Sciatic nerve (tissue), 2 donors: ENCODE measurements at regions of chr12 and their contacts with region 1.

Region 1: DNA sequence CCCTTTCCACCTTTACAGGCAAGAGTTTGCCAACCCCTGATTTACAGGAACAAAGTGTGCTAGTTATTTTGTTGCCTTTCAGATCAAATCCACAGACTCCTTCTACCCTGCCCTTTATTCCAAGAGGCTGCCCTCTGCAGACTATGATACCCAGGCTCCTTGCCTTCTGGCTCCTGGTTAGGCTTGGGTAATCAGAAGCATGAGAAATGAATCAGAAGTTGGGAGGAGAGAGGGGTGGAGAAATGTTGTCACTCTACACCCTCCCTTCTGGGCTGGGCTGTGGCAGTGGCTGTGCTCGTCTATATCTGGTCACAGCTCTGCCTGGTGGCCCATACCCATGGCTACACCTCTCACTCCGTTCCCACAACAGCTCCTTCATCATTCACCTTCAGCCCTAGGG is 204.6 kb upstream of the PLXNC1 start:
- DNase-seq: no peak
- ATAC-seq: peak; percentile 80

Region 2: GRCh38 chr12:94020335-94020734 is 76.6 kb after region 1 on chr12:
- intact Hi-C with region 1: loop called (anchors 2 kb)
- DNase-seq: no peak
- ATAC-seq: peak; percentile 34